B cell (primary cell): ENCODE measurements at regions of chr5 and their contacts with region 1.

Region 1: GRCh38 chr5:54844905-54845566 is 140.4 kb downstream of the ESM1 start:
- DNase-seq: peak; percentile 76
- ATAC-seq: peak; percentile 54
- H3K4me3 ChIP-seq: peak overlapping the region in 3 of 5 experiments; percentile 26 to 41 (median 28)
- H3K4me3 Mint-ChIP-seq: peak overlapping the region; percentile 85
- H3K27ac ChIP-seq: peak overlapping the region in 1 of 2 donors; percentile 70
- H3K27ac Mint-ChIP-seq: peak overlapping the region; percentile 91
- H3K4me1 ChIP-seq: peaks cover 5 to 10% of the 10 kb centered on the region in 2 donors
- H3K4me1 Mint-ChIP-seq: peaks cover 23% of the 10 kb centered on the region
- H3K27me3 ChIP-seq: no peaks in the 10 kb centered on the region
- H3K27me3 Mint-ChIP-seq: peaks cover 16% of the 10 kb centered on the region
- CTCF ChIP-seq: peak; percentile 78

Region 2: DNA sequence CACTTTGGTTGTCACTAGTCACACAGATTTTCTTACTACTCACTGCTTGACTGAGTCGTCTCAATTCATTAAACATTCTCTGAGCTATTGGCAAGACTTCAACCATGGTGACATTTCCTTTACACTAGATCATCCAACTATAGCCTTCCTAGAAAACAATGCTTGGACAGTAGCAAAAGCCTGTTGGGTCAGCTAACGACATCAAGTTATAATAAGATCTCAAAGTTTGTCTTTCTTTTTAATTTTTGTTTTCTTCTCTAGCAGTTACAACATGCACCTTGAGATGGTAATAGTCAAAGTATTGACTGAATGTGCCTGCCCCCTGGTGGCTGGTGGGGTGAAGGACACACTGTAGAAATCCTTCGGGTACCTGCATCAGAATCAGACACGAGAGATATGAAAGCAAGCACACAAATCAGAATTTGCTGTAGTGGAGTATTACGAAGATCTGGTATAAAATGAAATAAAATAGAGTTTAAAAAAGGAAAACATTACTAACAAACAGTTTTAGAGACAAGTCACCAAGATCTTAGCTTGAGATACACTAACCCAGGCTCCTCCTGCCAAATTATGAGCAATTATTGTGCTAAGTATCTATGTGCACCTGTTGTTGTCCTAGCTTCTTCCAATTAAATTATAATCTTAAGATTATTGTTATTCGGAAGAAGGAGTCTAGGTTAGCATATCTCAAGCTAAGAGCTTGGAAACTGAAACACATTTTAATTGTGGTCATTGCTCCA is 615.8 kb before region 1 on chr5:
- CTCF ChIA-PET with region 1: no interaction called
- POLR2A ChIA-PET with region 1: no interaction called
- intact Hi-C with region 1: no loop called
- DNase-seq: peak; percentile 66
- ATAC-seq: peak; percentile 73
- H3K4me3 ChIP-seq: no peak overlapping the region
- H3K4me3 Mint-ChIP-seq: no peak overlapping the region
- H3K27ac ChIP-seq: no peak overlapping the region
- H3K27ac Mint-ChIP-seq: no peak overlapping the region
- H3K4me1 ChIP-seq: peaks cover 5 to 8% of the 10 kb centered on the region in 2 donors
- H3K4me1 Mint-ChIP-seq: peaks cover 32% of the 10 kb centered on the region
- H3K27me3 ChIP-seq: no peaks in the 10 kb centered on the region
- H3K27me3 Mint-ChIP-seq: no peaks in the 10 kb centered on the region
- CTCF ChIP-seq: peak; percentile 97

Region 3: DNA sequence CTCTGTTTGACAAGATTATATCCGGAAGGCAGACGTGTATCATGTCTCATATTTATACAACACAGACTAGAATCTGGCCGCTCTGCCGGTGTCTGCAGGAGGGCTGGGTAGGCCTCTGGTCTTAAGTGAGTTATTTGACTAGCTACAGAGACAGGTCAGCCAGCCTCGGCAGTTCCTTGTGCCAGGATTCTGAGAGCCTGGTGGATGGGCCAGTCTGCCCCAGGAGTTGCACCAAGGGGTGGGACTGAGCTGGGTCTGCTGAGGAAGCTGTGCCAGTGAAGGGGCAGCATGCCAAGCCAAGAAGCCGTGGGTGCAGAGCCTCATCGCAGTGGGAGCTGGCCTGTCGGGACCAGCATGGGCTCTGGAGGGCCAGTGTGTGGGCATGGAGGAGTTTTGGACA is 320.3 kb before region 1 on chr5:
- CTCF ChIA-PET with region 1: interaction called, 258 read pairs
- POLR2A ChIA-PET with region 1: no interaction called
- intact Hi-C with region 1: no loop called
- DNase-seq: no peak
- ATAC-seq: no peak
- H3K4me3 ChIP-seq: no peak overlapping the region
- H3K4me3 Mint-ChIP-seq: no peak overlapping the region
- H3K27ac ChIP-seq: peak overlapping the region in 1 of 2 donors; percentile 42
- H3K27ac Mint-ChIP-seq: no peak overlapping the region
- H3K4me1 ChIP-seq: peaks cover 54 to 87% of the 10 kb centered on the region in 2 donors
- H3K4me1 Mint-ChIP-seq: peaks cover 56% of the 10 kb centered on the region
- H3K27me3 ChIP-seq: no peaks in the 10 kb centered on the region
- H3K27me3 Mint-ChIP-seq: no peaks in the 10 kb centered on the region
- CTCF ChIP-seq: no peak

Region 4: GRCh38 chr5:54610197-54610944 is 234.7 kb before region 1 on chr5:
- CTCF ChIA-PET with region 1: interaction called, 14 read pairs
- POLR2A ChIA-PET with region 1: no interaction called
- intact Hi-C with region 1: loop called (anchors 1 kb)
- DNase-seq: peak; percentile 85
- ATAC-seq: peak; percentile 95
- H3K4me3 ChIP-seq: peak overlapping the region in 2 of 5 experiments; percentile 9 to 45
- H3K4me3 Mint-ChIP-seq: peak overlapping the region; percentile 52
- H3K27ac ChIP-seq: peak overlapping the region; percentile 50 to 57
- H3K27ac Mint-ChIP-seq: peak overlapping the region; percentile 82
- H3K4me1 ChIP-seq: peaks cover 32 to 34% of the 10 kb centered on the region in 2 donors
- H3K4me1 Mint-ChIP-seq: peaks cover 46% of the 10 kb centered on the region
- H3K27me3 ChIP-seq: no peaks in the 10 kb centered on the region
- H3K27me3 Mint-ChIP-seq: no peaks in the 10 kb centered on the region
- CTCF ChIP-seq: no peak

Region 5: DNA sequence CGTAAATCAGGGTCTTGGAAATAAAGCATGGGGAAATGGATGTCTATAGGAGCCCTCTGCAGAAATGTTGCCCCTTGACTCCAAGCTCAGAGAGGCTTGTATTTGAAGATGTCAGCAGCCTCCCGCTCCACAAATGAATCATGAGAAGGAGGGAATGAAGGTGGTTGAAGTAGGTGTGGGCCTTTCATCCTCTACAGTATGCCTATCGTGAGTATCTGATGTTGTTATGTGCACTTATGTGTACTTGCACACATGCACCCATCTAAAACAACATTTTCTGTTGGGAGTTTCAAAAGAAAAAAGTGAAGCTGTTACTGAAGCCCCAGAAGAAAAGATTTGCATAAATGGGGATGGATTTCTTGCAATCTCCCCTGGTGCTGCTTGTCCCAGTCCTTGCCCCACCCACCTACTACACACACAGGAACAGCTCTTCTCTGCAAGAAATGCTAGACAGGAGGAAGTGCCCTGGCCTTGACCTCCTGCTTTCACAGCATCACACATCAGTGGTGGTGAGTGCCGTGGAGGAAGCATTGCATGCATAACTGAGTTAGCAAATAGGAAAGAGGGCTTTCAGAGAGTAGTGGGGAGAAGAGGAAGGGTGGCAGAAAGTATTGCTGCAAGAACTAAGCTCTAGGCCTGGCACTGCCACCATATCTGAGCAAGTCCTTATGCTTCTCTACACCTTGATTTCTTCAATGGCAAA is 171.4 kb before region 1 on chr5:
- CTCF ChIA-PET with region 1: interaction called, 16 read pairs
- POLR2A ChIA-PET with region 1: no interaction called
- intact Hi-C with region 1: no loop called
- DNase-seq: peak; percentile 74
- ATAC-seq: peak; percentile 91
- H3K4me3 ChIP-seq: no peak overlapping the region
- H3K4me3 Mint-ChIP-seq: peak overlapping the region; percentile 43
- H3K27ac ChIP-seq: peak overlapping the region; percentile 26 to 62
- H3K27ac Mint-ChIP-seq: peak overlapping the region; percentile 47
- H3K4me1 ChIP-seq: peaks cover 68 to 76% of the 10 kb centered on the region in 2 donors
- H3K4me1 Mint-ChIP-seq: peaks cover 75% of the 10 kb centered on the region
- H3K27me3 ChIP-seq: no peaks in the 10 kb centered on the region
- H3K27me3 Mint-ChIP-seq: no peaks in the 10 kb centered on the region
- CTCF ChIP-seq: no peak

Region 6: GRCh38 chr5:54867310-54867944 is 22.4 kb after region 1 on chr5:
- CTCF ChIA-PET with region 1: interaction called, 48 read pairs
- POLR2A ChIA-PET with region 1: interaction called, 3 read pairs
- intact Hi-C with region 1: loop called (anchors 1 kb)
- DNase-seq: peak; percentile 75
- ATAC-seq: peak; percentile 60
- H3K4me3 ChIP-seq: peak overlapping the region in 3 of 5 experiments; percentile 11 to 32 (median 20)
- H3K4me3 Mint-ChIP-seq: peak overlapping the region; percentile 32
- H3K27ac ChIP-seq: no peak overlapping the region
- H3K27ac Mint-ChIP-seq: no peak overlapping the region
- H3K4me1 ChIP-seq: peaks cover 3 to 5% of the 10 kb centered on the region in 2 donors
- H3K4me1 Mint-ChIP-seq: peaks cover 6% of the 10 kb centered on the region
- H3K27me3 ChIP-seq: peaks cover 0 to 5% (median 2%) of the 10 kb centered on the region in 4 experiments
- H3K27me3 Mint-ChIP-seq: peaks cover 34% of the 10 kb centered on the region
- CTCF ChIP-seq: peak; percentile 81